HepG2 (cell line): ENCODE measurements at regions of chr6 and their contacts with region 1.

Region 1: GRCh38 chr6:11009353-11009752 is 34.8 kb downstream of the ELOVL2 start:
- DNase-seq: peak; percentile 65
- ATAC-seq: no peak
- H3K4me3 ChIP-seq: no peak overlapping the region
- H3K27ac ChIP-seq: peak overlapping the region; percentile 67
- H3K4me1 ChIP-seq: peaks cover 97% of the 10 kb centered on the region
- H3K27me3 ChIP-seq: no peaks in the 10 kb centered on the region
- CTCF ChIP-seq: no peak
- EP300 ChIP-seq: peak in 1 of 2 experiments; percentile 57; a peak in 2 of 4 replicates
- POLR2A ChIP-seq: 0 out of 4 replicates have a peak, but pooled peaks of 1 of the 2 experiments have one; percentile 31
- RAD21 ChIP-seq: no peak

Region 2: GRCh38 chr6:11023032-11023431 is 13.7 kb after region 1 on chr6:
- CTCF ChIA-PET with region 1: no interaction called
- POLR2A ChIA-PET with region 1: interaction called, 20 read pairs
- in situ Hi-C with region 1: no loop called
- intact Hi-C with region 1: no loop called
- DNase-seq: no peak
- ATAC-seq: no peak
- H3K4me3 ChIP-seq: no peak overlapping the region
- H3K27ac ChIP-seq: no peak overlapping the region
- H3K4me1 ChIP-seq: peaks cover 49% of the 10 kb centered on the region
- H3K27me3 ChIP-seq: no peaks in the 10 kb centered on the region
- CTCF ChIP-seq: no peak
- EP300 ChIP-seq: no peak
- POLR2A ChIP-seq: no peak
- RAD21 ChIP-seq: no peak

Region 3: GRCh38 chr6:11101417-11101816 is 92.1 kb after region 1 on chr6:
- CTCF ChIA-PET with region 1: no interaction called
- POLR2A ChIA-PET with region 1: no interaction called
- in situ Hi-C with region 1: no loop called
- intact Hi-C with region 1: no loop called
- DNase-seq: no peak
- ATAC-seq: no peak
- H3K4me3 ChIP-seq: no peak overlapping the region
- H3K27ac ChIP-seq: no peak overlapping the region
- H3K4me1 ChIP-seq: peaks cover 28% of the 10 kb centered on the region
- H3K27me3 ChIP-seq: no peaks in the 10 kb centered on the region
- CTCF ChIP-seq: no peak
- EP300 ChIP-seq: no peak
- POLR2A ChIP-seq: no peak
- RAD21 ChIP-seq: no peak